ENCODE measurements at regions of chr11 and their contacts with region 1.

Region 1: DNA sequence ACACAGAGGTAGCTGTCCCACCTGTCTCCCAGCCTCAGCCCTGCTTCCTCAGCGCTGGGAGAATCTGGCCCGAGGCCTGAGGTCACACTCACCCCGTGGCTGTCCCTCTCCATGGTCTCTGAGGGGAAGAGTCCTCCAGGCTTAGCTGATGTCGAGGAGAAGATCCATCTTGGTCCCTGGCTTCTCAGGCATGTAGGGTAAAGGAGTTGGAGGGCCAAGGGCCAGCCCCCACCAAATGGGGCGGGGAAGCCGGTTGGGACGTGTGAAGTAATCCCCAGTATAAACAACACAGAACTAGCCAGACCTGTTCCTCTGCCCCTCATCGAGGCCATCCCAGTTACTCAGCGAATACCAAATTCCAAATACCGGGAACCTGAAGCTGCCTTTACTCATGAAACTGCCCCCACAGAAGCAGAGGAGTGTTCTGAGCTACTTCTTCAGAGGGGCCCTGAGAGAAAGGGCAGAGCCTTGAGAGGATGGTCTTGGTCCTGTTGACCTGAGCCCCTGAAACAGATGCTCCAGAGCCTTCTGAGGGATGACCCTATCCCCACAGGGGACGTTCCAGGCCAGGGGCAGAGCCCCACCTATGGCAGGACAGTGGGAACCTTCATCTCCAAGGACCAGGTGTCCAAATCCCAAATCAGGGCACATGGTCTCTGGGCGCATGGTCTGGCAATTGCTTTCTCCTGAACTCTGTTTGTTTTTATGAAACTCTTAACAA is at the start of gene TMPRSS13:
- DNase-seq: no peak
- ATAC-seq: no peak
- H3K4me3 ChIP-seq: no peak within 1 kb of the TSS
- H3K27ac ChIP-seq: no peak within 1 kb of the TSS
- H3K4me1 ChIP-seq: peaks cover 0 to 37% (median 0%) of the 10 kb centered on the region in 9 donors
- H3K27me3 ChIP-seq: peaks cover 0 to 11% (median 0%) of the 10 kb centered on the region in 7 donors
- CTCF ChIP-seq: no peak
- total RNA-seq, gene TMPRSS13: 0.07 to 0.32 (median 0.18) TPM in 3 of 10 donors, not detected in the others

Region 2: GRCh38 chr11:117918321-117919215 is 10.8 kb before region 1 on chr11:
- intact Hi-C with region 1: loop called in 1 of 10 experiments (anchors 1 kb)
- DNase-seq: no peak
- ATAC-seq: no peak
- H3K4me3 ChIP-seq: no peak overlapping the region
- H3K27ac ChIP-seq: no peak overlapping the region
- H3K4me1 ChIP-seq: no peaks in the 10 kb centered on the region
- H3K27me3 ChIP-seq: peaks cover 0 to 15% (median 0%) of the 10 kb centered on the region in 7 donors
- CTCF ChIP-seq: no peak

Region 3: DNA sequence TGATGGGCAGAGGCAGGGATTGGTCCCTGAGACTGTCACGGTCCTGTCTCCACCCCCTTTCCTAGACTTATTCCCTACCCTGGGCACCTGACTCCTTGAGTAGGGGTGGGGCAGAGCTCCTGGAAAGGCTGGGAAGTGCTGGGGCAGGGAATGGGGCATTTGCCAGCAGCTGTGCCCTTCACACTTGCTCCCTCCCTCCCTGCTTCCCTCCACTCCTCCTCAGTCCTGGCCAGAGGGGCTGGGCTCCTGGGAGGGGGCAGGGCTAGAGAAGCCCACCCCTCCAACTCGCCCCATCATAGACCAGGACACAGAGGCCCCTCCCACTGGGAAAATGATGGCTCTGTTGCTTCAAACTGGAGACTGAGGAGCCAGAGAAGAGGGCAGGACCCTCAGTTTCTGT is 235.5 kb after region 1 on chr11:
- intact Hi-C with region 1: no loop called
- DNase-seq: no peak
- ATAC-seq: no peak
- H3K4me3 ChIP-seq: no peak overlapping the region
- H3K27ac ChIP-seq: no peak overlapping the region
- H3K4me1 ChIP-seq: peaks cover 0 to 19% (median 0%) of the 10 kb centered on the region in 9 donors
- H3K27me3 ChIP-seq: peaks cover 0 to 4% (median 0%) of the 10 kb centered on the region in 7 donors
- CTCF ChIP-seq: no peak

Measured in heart right ventricle (tissue), 16 donors.